GM12878 (cell line): ENCODE measurements at regions of chr15 and their contacts with region 1.

Region 1: DNA sequence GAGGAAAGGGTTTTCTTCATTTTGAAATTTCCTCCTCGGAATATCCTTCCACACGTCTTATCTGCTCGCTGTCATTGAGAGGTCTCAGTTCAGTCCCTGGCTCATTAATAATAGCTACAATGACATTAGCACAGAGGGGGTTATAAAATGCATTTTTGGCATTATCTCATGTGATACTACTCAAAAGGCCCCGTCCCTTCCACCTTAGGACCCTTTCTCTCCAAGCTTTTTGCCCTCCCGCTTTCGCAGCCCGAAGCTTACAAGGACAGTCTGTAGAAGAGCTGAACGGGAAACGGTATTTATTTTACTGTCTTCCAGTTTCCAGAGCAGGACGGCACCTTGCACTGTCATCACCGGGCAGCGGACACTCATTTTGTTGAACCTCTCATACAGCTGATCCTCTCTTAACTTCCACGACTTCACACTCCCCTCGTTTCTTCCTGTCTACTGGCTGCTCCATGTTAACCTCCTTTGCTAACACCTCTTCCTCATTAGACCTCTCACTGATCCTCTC is 5.6 kb upstream of the PLEKHO2 start:
- DNase-seq: no peak
- ATAC-seq: peak; percentile 9
- H3K4me3 ChIP-seq: no peak overlapping the region
- H3K27ac ChIP-seq: no peak overlapping the region
- H3K4me1 ChIP-seq: 0 out of 2 replicates have a peak, but pooled peaks cover 10% of the 10 kb centered on the region
- H3K27me3 ChIP-seq: no peaks in the 10 kb centered on the region
- CTCF ChIP-seq: no peak
- EP300 ChIP-seq: no peak
- POLR2A ChIP-seq: no peak
- RAD21 ChIP-seq: no peak

Region 2: DNA sequence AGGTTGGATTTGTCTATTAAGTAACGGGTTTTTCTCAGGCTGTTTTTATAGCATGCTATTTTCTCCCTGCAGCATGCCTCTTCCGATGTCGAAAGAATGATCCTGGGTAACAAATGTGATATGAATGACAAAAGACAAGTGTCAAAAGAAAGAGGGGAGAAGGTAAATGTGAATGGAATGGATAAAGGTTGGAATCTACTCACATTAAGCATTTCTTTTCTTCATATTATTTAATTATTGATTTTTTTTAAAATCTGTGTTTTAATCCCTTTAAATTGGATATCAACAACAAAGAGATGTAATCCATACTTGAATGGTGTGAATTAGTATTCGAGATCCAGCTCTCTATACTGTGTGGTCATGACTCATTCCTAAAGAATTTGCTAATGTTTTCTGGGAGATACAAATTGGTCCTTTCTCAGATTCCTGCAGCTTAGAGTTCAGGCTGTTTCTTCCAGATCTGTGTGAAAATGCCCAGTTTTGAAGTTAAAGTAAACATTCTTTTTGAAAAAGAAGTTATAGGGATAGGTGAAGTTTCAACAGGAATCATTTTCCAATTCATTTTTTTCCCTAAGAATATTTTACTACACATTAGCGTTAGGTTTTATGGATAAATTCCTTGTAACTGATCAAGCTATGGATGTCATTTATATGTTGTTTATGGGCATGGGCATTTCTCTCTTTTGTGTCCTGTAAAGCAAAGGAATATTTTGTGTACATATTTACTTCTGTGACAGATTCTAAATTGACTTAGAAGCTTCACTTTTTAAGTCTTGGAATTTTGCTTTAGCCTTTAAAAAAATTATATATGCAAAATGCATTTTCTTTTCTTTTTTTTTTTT is 1579.4 kb before region 1 on chr15:
- CTCF ChIA-PET with region 1: no interaction called
- POLR2A ChIA-PET with region 1: interaction called, 12 read pairs
- RAD21 ChIA-PET with region 1: no interaction called
- SMC1A ChIA-PET with region 1: no interaction called
- in situ Hi-C with region 1: no loop called
- intact Hi-C with region 1: no loop called
- DNase-seq: no peak
- ATAC-seq: no peak
- H3K4me3 ChIP-seq: no peak overlapping the region
- H3K27ac ChIP-seq: no peak overlapping the region
- H3K4me1 ChIP-seq: no peaks in the 10 kb centered on the region
- H3K27me3 ChIP-seq: no peaks in the 10 kb centered on the region
- CTCF ChIP-seq: no peak
- EP300 ChIP-seq: no peak
- POLR2A ChIP-seq: no peak
- RAD21 ChIP-seq: no peak

Region 3: GRCh38 chr15:64251121-64251520 is 585.0 kb before region 1 on chr15:
- CTCF ChIA-PET with region 1: no interaction called
- POLR2A ChIA-PET with region 1: no interaction called
- RAD21 ChIA-PET with region 1: no interaction called
- SMC1A ChIA-PET with region 1: no interaction called
- in situ Hi-C with region 1: no loop called
- intact Hi-C with region 1: no loop called
- DNase-seq: no peak
- ATAC-seq: no peak
- H3K4me3 ChIP-seq: no peak overlapping the region
- H3K27ac ChIP-seq: no peak overlapping the region
- H3K4me1 ChIP-seq: peaks cover 22% of the 10 kb centered on the region
- H3K27me3 ChIP-seq: no peaks in the 10 kb centered on the region
- CTCF ChIP-seq: no peak
- EP300 ChIP-seq: no peak
- POLR2A ChIP-seq: no peak
- RAD21 ChIP-seq: no peak

Region 4: GRCh38 chr15:64521726-64522164 is 314.3 kb before region 1 on chr15:
- CTCF ChIA-PET with region 1: no interaction called
- POLR2A ChIA-PET with region 1: no interaction called
- RAD21 ChIA-PET with region 1: no interaction called
- SMC1A ChIA-PET with region 1: no interaction called
- in situ Hi-C with region 1: no loop called
- intact Hi-C with region 1: no loop called
- DNase-seq: no peak
- ATAC-seq: peak; percentile 73
- H3K4me3 ChIP-seq: no peak overlapping the region
- H3K27ac ChIP-seq: no peak overlapping the region
- H3K4me1 ChIP-seq: no peaks in the 10 kb centered on the region
- H3K27me3 ChIP-seq: no peaks in the 10 kb centered on the region
- CTCF ChIP-seq: no peak
- EP300 ChIP-seq: no peak
- POLR2A ChIP-seq: no peak
- RAD21 ChIP-seq: no peak

Region 5: GRCh38 chr15:64651573-64652260 is 184.4 kb before region 1 on chr15:
- CTCF ChIA-PET with region 1: no interaction called
- POLR2A ChIA-PET with region 1: no interaction called
- RAD21 ChIA-PET with region 1: no interaction called
- SMC1A ChIA-PET with region 1: no interaction called
- in situ Hi-C with region 1: no loop called
- intact Hi-C with region 1: no loop called
- DNase-seq: peak; percentile 82
- ATAC-seq: peak; percentile 96
- H3K4me3 ChIP-seq: peak overlapping the region; percentile 15; the same call in 1 of the 2 replicates
- H3K27ac ChIP-seq: peak overlapping the region; percentile 74
- H3K4me1 ChIP-seq: peaks cover 25% of the 10 kb centered on the region
- H3K27me3 ChIP-seq: no peaks in the 10 kb centered on the region
- CTCF ChIP-seq: no peak
- EP300 ChIP-seq: no peak
- POLR2A ChIP-seq: 0 out of 2 replicates have a peak, but pooled peaks have one; percentile 26
- RAD21 ChIP-seq: 0 out of 2 replicates have a peak, but pooled peaks have one; percentile 20

Region 6: GRCh38 chr15:64717735-64718495 is 118.2 kb before region 1 on chr15:
- CTCF ChIA-PET with region 1: no interaction called
- POLR2A ChIA-PET with region 1: no interaction called
- RAD21 ChIA-PET with region 1: no interaction called
- SMC1A ChIA-PET with region 1: no interaction called
- in situ Hi-C with region 1: no loop called
- intact Hi-C with region 1: no loop called
- DNase-seq: no peak
- ATAC-seq: no peak
- H3K4me3 ChIP-seq: no peak overlapping the region
- H3K27ac ChIP-seq: no peak overlapping the region
- H3K4me1 ChIP-seq: no peaks in the 10 kb centered on the region
- H3K27me3 ChIP-seq: no peaks in the 10 kb centered on the region
- CTCF ChIP-seq: no peak
- EP300 ChIP-seq: no peak
- POLR2A ChIP-seq: no peak
- RAD21 ChIP-seq: no peak

Region 7: GRCh38 chr15:64740311-64741170 is 95.5 kb before region 1 on chr15:
- CTCF ChIA-PET with region 1: interaction called, 11 read pairs
- POLR2A ChIA-PET with region 1: interaction called, 3 read pairs
- RAD21 ChIA-PET with region 1: interaction called, 9 read pairs
- SMC1A ChIA-PET with region 1: interaction called, 4 read pairs
- in situ Hi-C with region 1: no loop called
- intact Hi-C with region 1: no loop called
- DNase-seq: no peak
- ATAC-seq: peak; percentile 80
- H3K4me3 ChIP-seq: no peak overlapping the region
- H3K27ac ChIP-seq: no peak overlapping the region
- H3K4me1 ChIP-seq: no peaks in the 10 kb centered on the region
- H3K27me3 ChIP-seq: no peaks in the 10 kb centered on the region
- CTCF ChIP-seq: peak; percentile 21 to 48 (median 25); a peak in 4 of 6 replicates
- EP300 ChIP-seq: no peak
- POLR2A ChIP-seq: no peak
- RAD21 ChIP-seq: peak; percentile 68

Region 8: DNA sequence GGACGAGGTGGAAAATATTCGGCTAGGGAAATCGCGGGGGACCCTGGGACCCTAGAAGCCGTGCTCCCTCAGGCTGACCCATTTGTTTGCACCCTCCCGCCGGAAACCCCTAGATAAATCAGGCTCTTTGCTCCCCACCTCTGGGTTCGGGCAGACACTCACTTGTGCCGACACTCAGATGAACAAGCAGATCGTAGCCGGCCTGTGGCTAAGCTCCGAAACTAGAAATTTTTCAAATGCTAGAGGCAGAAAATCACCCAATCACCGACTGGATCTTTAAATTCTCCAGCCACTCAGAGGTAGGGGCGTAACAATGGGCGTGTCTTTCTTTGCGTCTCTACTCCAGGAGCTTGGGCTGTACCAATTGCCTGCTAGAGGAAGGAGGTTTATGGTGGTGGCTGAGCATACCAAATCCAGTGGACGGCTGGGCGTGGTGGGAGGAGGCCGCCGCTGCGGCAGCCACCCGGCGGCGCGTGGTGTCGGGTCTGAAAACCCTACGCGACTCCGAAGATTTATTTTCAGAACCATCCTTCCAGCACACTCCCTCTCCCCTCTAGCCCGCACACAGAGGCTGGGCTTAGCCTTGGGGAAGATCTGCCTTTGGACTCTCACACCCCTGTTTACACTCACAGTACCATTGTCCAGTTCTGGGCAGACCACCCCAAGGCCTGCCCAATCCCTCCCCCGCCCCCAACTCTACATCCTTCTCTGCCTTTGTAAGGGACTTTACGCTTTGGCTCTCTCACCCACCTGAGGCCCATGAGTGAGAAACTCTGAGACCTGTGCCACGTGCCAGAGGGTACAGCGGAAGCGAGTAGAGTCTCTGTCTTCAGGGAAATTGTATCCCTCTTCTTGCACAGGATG is 10.4 kb before region 1 on chr15 and contains the start of gene PIF1:
- CTCF ChIA-PET with region 1: interaction called, 32 read pairs
- POLR2A ChIA-PET with region 1: interaction called, 16 read pairs
- RAD21 ChIA-PET with region 1: interaction called, 17 read pairs
- SMC1A ChIA-PET with region 1: interaction called, 18 read pairs
- in situ Hi-C with region 1: no loop called
- intact Hi-C with region 1: no loop called
- DNase-seq: peak; percentile 98
- ATAC-seq: peak; percentile 93
- H3K4me3 ChIP-seq: peak within 1 kb of the TSS; percentile 88
- H3K27ac ChIP-seq: peak within 1 kb of the TSS; percentile 85
- H3K4me1 ChIP-seq: peaks cover 14% of the 10 kb centered on the region
- H3K27me3 ChIP-seq: no peaks in the 10 kb centered on the region
- CTCF ChIP-seq: peak in 1 of 3 experiments; percentile 9; a peak in 1 of 6 replicates
- EP300 ChIP-seq: peak in 1 of 2 experiments; percentile 34; a peak in 1 of 4 replicates
- POLR2A ChIP-seq: peak; percentile 88
- RAD21 ChIP-seq: no peak
- polyA plus RNA-seq, gene PIF1: 3.7 to 7.2 TPM

Region 9: GRCh38 chr15:64883997-64884511 is 48.0 kb after region 1 on chr15:
- CTCF ChIA-PET with region 1: interaction called, 13 read pairs
- POLR2A ChIA-PET with region 1: interaction called, 7 read pairs
- RAD21 ChIA-PET with region 1: interaction called, 5 read pairs
- SMC1A ChIA-PET with region 1: interaction called, 9 read pairs
- in situ Hi-C with region 1: no loop called
- intact Hi-C with region 1: no loop called
- DNase-seq: peak; percentile 79
- ATAC-seq: peak; percentile 92
- H3K4me3 ChIP-seq: no peak overlapping the region
- H3K27ac ChIP-seq: peak overlapping the region; percentile 85
- H3K4me1 ChIP-seq: peaks cover 30% of the 10 kb centered on the region
- H3K27me3 ChIP-seq: no peaks in the 10 kb centered on the region
- CTCF ChIP-seq: no peak
- EP300 ChIP-seq: peak; percentile 44 to 62; a peak in 2 of 4 replicates
- POLR2A ChIP-seq: peak; percentile 65
- RAD21 ChIP-seq: no peak

Region 10: GRCh38 chr15:64905119-64905831 is 69.2 kb after region 1 on chr15:
- CTCF ChIA-PET with region 1: interaction called, 14 read pairs
- POLR2A ChIA-PET with region 1: no interaction called
- RAD21 ChIA-PET with region 1: interaction called, 4 read pairs
- SMC1A ChIA-PET with region 1: interaction called, 4 read pairs
- in situ Hi-C with region 1: no loop called
- intact Hi-C with region 1: no loop called
- DNase-seq: no peak
- ATAC-seq: peak; percentile 98
- H3K4me3 ChIP-seq: peak overlapping the region; percentile 46; the same call in 1 of the 2 replicates
- H3K27ac ChIP-seq: 0 out of 2 replicates have a peak overlapping the region, but pooled peaks have one; percentile 20
- H3K4me1 ChIP-seq: peaks cover 13% of the 10 kb centered on the region
- H3K27me3 ChIP-seq: no peaks in the 10 kb centered on the region
- CTCF ChIP-seq: peak; percentile 87 to 91 (median 88)
- EP300 ChIP-seq: no peak
- POLR2A ChIP-seq: peak; percentile 24; the same call in 1 of the 2 replicates
- RAD21 ChIP-seq: peak; percentile 86